ENCODE measurements at regions of chrX and their contacts with region 1.

Region 1: DNA sequence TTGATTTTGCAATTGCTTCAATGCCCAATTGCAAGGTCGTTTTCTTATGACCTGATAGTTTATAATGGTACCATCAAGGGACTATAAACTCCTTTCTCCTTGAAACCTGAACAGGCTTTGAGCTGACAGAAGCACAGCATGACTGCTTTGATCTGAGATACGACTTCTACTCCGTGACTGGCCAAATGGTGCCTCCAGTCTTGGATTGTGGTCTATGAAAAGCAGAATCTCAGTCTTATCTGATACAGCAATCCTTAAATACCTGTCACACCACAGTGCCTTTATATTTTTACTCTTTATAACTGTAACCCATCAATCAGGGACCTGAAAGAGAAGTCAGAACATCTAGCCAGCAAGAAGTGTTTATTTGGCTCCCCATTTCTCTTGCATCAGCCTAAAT is 93.1 kb downstream of the DOCK11 start:
- DNase-seq: no peak
- ATAC-seq: no peak
- H3K4me3 ChIP-seq: no peak overlapping the region
- H3K27ac ChIP-seq: no peak overlapping the region
- H3K4me1 ChIP-seq: no peaks in the 10 kb centered on the region
- H3K27me3 ChIP-seq: no peaks in the 10 kb centered on the region
- CTCF ChIP-seq: no peak
- POLR2A ChIP-seq: no peak
- RAD21 ChIP-seq: no peak

Region 2: GRCh38 chrX:118468122-118468521 is 120.6 kb before region 1 on chrX:
- CTCF ChIA-PET with region 1: no interaction called
- POLR2A ChIA-PET with region 1: no interaction called
- dilution Hi-C with region 1: no loop called
- in situ Hi-C with region 1: loop called (anchors 10 kb)
- intact Hi-C with region 1: no loop called
- DNase-seq: no peak
- ATAC-seq: no peak
- H3K4me3 ChIP-seq: no peak overlapping the region
- H3K27ac ChIP-seq: no peak overlapping the region
- H3K4me1 ChIP-seq: no peaks in the 10 kb centered on the region
- H3K27me3 ChIP-seq: no peaks in the 10 kb centered on the region
- CTCF ChIP-seq: no peak
- POLR2A ChIP-seq: no peak
- RAD21 ChIP-seq: no peak

Region 3: GRCh38 chrX:118520216-118521206 is 68.2 kb before region 1 on chrX:
- CTCF ChIA-PET with region 1: no interaction called
- POLR2A ChIA-PET with region 1: no interaction called
- dilution Hi-C with region 1: no loop called
- in situ Hi-C with region 1: no loop called
- intact Hi-C with region 1: no loop called
- DNase-seq: peak; percentile 80
- ATAC-seq: peak; percentile 58
- H3K4me3 ChIP-seq: no peak overlapping the region
- H3K27ac ChIP-seq: peak overlapping the region; percentile 81; the same call in 1 of the 2 replicates
- H3K4me1 ChIP-seq: peaks cover 20% of the 10 kb centered on the region
- H3K27me3 ChIP-seq: no peaks in the 10 kb centered on the region
- CTCF ChIP-seq: no peak
- POLR2A ChIP-seq: no peak
- RAD21 ChIP-seq: no peak